Activated naive CD4-positive, alpha-beta T cell treated with anti-CD3 and anti-CD28 coated beads for 36 hours (primary cell): ENCODE measurements at regions of chr10 and their contacts with region 1.

Region 1: GRCh38 chr10:6088721-6089390 is at the start of gene RBM17:
- DNase-seq: peak; percentile 98
- H3K4me3 Mint-ChIP-seq: peak within 1 kb of the TSS; percentile 92
- H3K27ac Mint-ChIP-seq: peak within 1 kb of the TSS; percentile 89
- H3K4me1 Mint-ChIP-seq: peaks cover 71% of the 10 kb centered on the region
- H3K27me3 Mint-ChIP-seq: no peaks in the 10 kb centered on the region
- total RNA-seq, gene RBM17: 157 to 162 TPM

Region 2: GRCh38 chr10:5446390-5446926 is 642.4 kb before region 1 on chr10:
- CTCF ChIA-PET with region 1: no interaction called
- intact Hi-C with region 1: loop called (anchors 5 kb)
- DNase-seq: peak; percentile 77
- H3K4me3 Mint-ChIP-seq: peak overlapping the region; percentile 61
- H3K27ac Mint-ChIP-seq: peak overlapping the region; percentile 33
- H3K4me1 Mint-ChIP-seq: peaks cover 48% of the 10 kb centered on the region
- H3K27me3 Mint-ChIP-seq: no peaks in the 10 kb centered on the region

Region 3: DNA sequence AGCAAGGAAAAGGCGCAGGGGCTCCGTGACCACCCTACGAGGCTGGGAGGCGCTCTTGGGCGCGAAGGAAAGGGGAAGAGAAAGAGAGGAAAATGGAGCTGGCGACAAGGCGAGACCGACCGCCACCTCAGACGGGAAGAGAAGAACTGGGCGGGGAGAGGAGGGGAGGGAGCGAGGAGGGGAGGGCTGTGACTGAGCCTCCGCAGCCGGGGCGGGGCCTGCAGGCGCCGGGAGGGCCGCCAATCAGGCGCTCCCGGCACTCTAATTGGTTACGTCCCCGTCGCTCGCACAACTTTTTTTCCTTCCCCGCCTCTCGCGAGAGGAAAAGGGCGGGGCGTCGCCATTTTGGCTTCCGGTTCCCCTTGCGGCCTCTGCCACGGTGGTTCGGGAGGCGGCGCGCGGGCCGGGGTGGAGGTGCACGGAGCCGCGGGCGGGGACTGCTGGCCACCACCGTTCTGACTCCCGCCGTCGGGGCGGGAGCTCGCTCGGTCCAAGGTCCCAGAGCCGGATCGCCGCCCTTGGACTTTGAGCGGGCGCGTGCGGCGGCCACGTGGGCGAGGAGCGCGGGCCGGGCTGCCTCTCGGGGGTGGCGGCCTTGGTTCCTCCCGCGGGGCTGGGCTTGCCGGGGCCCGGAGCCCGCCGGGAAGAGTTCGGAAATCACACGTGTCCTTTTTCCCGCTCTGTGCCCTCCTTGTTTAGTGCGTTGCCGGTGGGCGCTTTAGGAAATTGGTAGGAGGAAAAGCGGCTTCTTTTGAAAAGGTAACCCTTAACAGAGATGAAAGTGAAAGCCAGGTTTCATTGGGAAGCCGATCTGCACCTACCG is 275.4 kb before region 1 on chr10 and contains the start of gene GDI2:
- CTCF ChIA-PET with region 1: interaction called, 3 read pairs
- intact Hi-C with region 1: loop called (anchors 2 kb)
- DNase-seq: peak; percentile 98
- H3K4me3 Mint-ChIP-seq: peak within 1 kb of the TSS; percentile 84
- H3K27ac Mint-ChIP-seq: peak within 1 kb of the TSS; percentile 90
- H3K4me1 Mint-ChIP-seq: peaks cover 66% of the 10 kb centered on the region
- H3K27me3 Mint-ChIP-seq: no peaks in the 10 kb centered on the region
- total RNA-seq, gene GDI2: 277 to 288 TPM

Region 4: DNA sequence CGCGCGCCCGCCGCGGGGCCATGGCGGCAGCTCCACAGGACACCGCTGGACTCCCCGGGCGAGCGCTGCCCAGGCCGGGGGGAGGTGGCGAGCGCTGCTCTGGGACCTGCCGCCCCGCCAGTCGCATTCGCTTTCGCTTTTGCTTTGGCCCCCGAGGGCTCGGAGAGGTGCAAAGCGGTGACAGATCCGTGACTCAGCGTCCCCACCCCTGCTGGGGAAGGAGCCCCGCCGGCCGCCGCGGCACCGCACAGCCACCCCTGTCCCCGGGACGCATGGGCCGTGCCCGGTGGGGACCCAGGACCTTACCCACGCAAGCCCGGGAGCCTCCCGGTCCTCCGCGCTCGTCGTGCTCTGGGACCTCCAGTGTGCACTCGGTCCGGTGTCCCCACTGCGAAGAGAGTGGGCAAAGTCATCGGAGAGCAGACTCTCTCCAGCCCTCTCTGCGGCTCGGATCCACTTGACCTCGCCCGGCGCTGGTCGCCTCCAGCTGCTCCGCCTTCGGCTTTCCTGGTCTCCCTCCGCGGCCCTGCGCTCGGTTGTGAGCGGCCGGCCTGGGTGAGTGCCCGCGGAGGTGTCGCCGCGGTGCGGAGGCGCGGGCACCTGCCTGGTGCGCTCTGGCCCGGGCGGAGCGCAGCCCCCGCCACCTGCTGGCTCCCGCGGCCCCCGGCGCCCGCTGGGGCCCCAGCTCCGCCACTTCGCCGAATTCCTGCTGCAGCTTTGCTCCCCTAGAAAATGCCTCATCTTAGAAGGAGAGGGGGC is 111.2 kb before region 1 on chr10 and contains the start of gene IL15RA:
- CTCF ChIA-PET with region 1: interaction called, 12 read pairs
- intact Hi-C with region 1: no loop called
- DNase-seq: peak; percentile 91
- H3K4me3 Mint-ChIP-seq: peak within 1 kb of the TSS; percentile 97
- H3K27ac Mint-ChIP-seq: peak within 1 kb of the TSS; percentile 97
- H3K4me1 Mint-ChIP-seq: peaks cover 24% of the 10 kb centered on the region
- H3K27me3 Mint-ChIP-seq: no peaks in the 10 kb centered on the region
- total RNA-seq, gene IL15RA: 14.7 to 16.3 TPM

Region 5: DNA sequence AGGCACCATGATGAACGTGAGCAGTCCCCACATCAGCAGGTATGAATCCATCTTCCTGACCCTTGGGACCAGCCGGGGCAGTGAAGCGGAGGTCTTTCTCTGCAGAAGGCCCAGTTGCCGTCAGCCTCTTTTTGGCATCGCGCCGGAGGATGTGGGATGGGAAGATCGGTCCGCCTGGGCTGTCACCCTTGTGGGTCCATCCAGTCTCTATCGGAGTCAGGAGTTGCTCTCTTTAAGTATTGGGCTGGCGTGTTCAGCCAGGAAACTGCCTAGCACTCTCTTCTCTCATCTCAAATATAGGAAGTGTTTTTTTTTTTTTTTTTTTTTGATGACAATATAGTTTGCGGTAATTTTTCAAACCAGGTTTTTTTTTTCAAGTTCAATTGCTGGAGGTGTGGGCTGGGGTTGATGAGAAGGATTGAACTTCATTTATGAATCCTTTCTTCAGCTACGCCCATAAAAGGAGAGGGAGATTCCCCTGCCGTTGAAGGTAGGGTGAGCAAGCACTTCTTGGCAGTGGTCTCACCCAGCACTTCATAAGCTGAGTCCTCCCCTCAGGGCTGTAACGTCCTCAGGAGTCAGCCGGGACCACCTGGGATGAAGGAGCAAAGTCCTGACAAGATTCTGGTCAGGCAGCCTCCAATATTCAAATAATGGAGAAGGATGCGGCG is 26.6 kb before region 1 on chr10 and contains the start of gene IL2RA:
- CTCF ChIA-PET with region 1: interaction called, 27 read pairs
- intact Hi-C with region 1: loop called (anchors 1 kb)
- DNase-seq: peak; percentile 83
- H3K4me3 Mint-ChIP-seq: peak within 1 kb of the TSS; percentile 86
- H3K27ac Mint-ChIP-seq: peak within 1 kb of the TSS; percentile 94
- H3K4me1 Mint-ChIP-seq: peaks cover 46% of the 10 kb centered on the region
- H3K27me3 Mint-ChIP-seq: no peaks in the 10 kb centered on the region
- total RNA-seq, gene IL2RA: 443 to 471 TPM

Region 6: GRCh38 chr10:6136215-6137201 is 47.7 kb after region 1 on chr10:
- CTCF ChIA-PET with region 1: interaction called, 12 read pairs
- intact Hi-C with region 1: no loop called
- DNase-seq: peak; percentile 89
- H3K4me3 Mint-ChIP-seq: peak overlapping the region; percentile 47
- H3K27ac Mint-ChIP-seq: peak overlapping the region; percentile 92
- H3K4me1 Mint-ChIP-seq: peaks cover 63% of the 10 kb centered on the region
- H3K27me3 Mint-ChIP-seq: peaks cover 4% of the 10 kb centered on the region

Region 7: DNA sequence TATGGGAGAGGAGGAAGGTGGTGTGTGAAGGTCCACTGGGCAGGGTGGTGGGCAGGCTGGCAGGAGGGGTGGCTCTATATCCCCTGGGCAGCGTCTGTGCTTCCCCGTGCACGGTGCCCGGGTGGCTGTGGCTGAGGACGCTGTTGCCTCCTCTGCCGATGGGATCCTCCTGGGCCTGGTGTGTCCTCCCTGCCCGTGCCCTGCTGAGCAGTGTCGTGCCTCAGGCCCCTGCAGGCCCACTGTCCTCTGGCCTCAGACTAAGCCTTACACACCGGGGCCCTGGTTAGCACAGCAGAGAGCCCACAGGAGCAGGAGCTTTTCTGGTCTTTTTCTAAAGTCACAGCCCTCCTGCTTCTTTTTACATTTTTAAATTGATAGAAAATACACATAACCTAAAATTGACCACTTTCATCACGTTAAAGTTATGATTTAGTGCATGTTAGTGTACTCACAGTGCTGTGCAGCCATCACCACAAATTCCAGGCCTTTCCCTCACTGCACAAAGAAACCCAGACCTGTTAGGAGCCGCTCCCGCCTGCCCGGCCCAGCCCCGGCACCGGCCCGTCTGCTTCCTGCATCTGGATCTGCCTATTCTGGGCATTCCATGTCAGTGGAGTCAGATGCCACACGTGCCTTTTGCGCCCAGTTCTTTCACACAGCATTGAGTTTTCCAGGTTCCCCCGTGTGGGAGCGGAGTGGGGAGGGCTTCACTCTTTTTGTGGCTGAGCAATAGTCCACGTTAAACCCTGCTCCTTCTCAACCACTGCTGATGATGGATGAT is 133.3 kb after region 1 on chr10:
- CTCF ChIA-PET with region 1: no interaction called
- intact Hi-C with region 1: no loop called
- DNase-seq: no peak
- H3K4me3 Mint-ChIP-seq: no peak overlapping the region
- H3K27ac Mint-ChIP-seq: no peak overlapping the region
- H3K4me1 Mint-ChIP-seq: peaks cover 6% of the 10 kb centered on the region
- H3K27me3 Mint-ChIP-seq: no peaks in the 10 kb centered on the region